A673 (cell line): ENCODE measurements at regions of chr14 and their contacts with region 1.

Region 1: DNA sequence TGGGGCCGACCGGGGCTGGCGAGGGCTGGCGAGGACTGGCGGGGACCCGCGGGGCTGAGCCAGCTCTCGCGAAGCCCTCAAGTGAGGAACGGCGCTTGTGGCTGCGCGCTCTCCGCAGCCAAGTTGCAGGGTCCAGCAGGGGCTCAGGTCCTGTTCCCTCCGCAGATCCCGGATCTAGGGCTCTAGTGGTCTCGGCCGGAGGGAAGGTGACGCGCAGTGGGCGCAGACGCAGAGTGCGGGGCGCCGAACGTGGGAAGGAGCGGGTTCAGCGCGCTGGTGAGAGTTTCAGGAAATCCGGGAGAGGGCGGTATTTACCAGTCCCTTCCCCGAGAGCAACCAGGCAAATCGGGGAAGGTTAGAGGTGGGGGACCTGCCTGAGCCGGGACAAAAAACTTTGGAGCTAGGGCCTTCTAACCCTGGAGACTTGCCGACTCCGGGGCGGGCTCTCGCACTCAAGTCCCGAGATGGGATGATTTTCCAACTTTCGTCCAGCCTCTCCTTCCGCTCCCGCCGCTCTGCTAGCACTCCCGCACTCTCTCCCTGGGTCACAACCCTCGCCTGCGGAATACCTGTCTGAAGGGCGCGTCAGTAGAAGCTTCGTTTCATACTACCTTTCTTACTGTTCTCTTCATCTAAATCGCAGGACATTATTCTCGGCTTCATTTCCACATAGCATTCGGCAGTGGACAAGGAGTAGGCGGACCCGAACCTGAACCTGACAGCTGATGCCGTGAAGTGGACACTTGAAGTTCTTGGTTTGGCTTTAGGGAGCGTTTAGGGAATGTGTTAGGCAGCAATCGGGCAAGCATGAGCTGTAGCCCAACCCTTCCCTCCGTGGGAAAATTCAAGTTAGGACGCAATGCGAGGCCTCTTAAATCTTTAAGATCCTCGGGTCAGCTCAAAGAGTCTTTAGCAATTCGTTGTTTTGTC is 13.6 kb upstream of the PAX9 start:
- DNase-seq: peak; percentile 87
- H3K4me3 ChIP-seq: peak overlapping the region; percentile 59
- H3K27ac ChIP-seq: peak overlapping the region; percentile 83
- H3K4me1 ChIP-seq: peaks cover 24% of the 10 kb centered on the region
- H3K27me3 ChIP-seq: no peaks in the 10 kb centered on the region
- CTCF ChIP-seq: peak; percentile 83

Region 2: DNA sequence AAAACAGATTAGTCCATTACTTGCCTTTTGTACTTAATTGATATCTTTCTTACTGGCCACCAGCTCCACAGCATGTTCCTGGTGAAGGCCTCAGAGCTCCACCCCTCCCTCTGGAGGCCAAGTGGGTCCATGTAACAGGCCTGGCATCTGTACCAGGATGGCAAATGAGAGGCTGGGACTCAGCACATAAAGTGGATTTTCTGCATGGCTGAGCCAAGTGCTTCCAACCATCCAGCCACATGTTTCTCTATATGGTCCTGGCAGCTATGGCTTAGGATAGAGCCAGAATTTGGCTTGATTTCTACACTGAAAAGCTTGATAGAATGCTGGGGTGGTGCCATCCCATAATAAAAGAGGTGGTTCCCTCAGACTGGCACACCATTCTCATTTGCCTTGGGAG is 107.6 kb after region 1 on chr14:
- CTCF ChIA-PET with region 1: interaction called, 4 read pairs
- POLR2A ChIA-PET with region 1: no interaction called
- intact Hi-C with region 1: loop called (anchors 5 kb)
- DNase-seq: peak; percentile 75
- H3K4me3 ChIP-seq: no peak overlapping the region
- H3K27ac ChIP-seq: peak overlapping the region; percentile 84
- H3K4me1 ChIP-seq: peaks cover 58% of the 10 kb centered on the region
- H3K27me3 ChIP-seq: no peaks in the 10 kb centered on the region
- CTCF ChIP-seq: peak; percentile 29; the same call in 1 of the 2 replicates

Region 3: DNA sequence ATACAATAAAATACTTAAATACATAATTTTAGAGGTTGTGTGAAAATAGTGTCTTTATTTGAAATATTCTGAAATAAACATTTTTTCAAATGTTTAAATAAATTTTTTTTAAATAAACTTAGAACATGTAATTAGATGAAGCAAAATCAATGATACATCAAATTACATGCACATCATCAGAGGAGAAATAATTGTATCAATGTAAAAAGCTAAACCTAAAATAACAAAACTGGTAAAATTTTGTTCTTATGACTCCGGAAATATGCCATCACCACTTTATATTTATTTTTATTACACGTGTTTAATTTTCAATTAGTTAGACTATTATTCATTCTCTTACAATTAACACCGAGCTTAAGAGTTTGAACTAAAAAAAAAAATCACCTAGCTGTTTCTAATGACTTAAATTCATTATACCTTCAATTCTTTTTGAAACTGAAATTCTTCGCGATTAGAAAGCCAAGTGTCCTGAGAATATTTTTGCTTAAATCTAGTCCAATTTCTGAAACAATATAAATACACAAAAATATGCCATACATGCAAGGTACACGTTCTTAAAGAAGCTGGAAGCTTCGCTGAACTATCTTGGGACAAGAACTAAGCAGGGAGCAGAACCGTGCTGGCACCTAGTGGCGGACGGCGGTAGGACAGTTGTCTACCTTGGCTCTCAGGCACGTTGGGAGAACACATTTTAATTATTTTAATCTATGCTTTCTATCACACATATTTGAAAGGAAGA is 293.9 kb after region 1 on chr14:
- CTCF ChIA-PET with region 1: interaction called, 19 read pairs
- POLR2A ChIA-PET with region 1: interaction called, 4 read pairs
- intact Hi-C with region 1: loop called (anchors 2 kb)
- DNase-seq: peak; percentile 82
- H3K4me3 ChIP-seq: no peak overlapping the region
- H3K27ac ChIP-seq: no peak overlapping the region
- H3K4me1 ChIP-seq: peaks cover 31% of the 10 kb centered on the region
- H3K27me3 ChIP-seq: no peaks in the 10 kb centered on the region
- CTCF ChIP-seq: peak; percentile 97

Region 4: DNA sequence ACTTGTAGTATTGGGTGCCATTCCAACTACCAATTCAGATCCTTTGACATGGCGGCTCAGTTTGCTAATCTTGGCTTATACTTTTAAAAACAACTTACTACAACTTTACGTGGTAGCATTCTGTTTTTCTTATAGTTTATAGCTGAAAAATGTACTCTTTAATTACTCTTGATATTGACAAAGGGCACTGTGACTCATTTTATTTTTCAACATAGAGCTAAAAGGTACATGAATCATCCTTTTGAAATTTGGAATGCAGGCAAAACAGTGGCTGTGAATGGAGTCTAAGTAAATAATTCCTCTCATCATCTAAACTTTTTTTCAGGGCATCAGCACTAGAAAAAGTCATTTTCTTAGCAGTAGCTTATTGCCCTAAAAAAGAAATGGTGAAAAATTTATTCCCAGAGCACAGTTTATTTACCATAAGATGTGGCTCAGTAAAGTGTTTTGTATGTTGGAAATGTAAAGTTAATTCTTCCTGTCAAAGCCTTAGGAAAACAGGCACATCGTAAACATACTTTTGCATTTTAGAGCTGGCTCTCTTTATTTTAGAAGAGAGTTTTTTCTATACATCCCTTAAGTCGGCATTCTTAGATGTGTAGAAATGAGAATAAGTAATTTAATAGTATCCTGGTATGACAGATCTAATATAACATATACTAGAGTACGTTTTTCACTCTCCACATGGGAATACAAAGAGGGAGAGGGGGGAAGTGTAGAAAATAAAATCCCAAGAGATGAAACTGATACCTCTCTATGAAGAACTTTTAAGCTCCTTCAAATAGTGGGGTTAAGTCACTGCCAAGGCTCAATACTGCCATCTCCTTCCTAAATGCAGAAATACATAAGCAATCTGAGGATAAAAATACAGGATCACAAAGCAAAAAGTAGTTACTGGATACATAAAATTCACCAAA is 469.1 kb after region 1 on chr14:
- CTCF ChIA-PET with region 1: interaction called, 14 read pairs
- POLR2A ChIA-PET with region 1: no interaction called
- intact Hi-C with region 1: loop called (anchors 5 kb)
- DNase-seq: peak; percentile 85
- H3K4me3 ChIP-seq: no peak overlapping the region
- H3K27ac ChIP-seq: no peak overlapping the region
- H3K4me1 ChIP-seq: peaks cover 10% of the 10 kb centered on the region
- H3K27me3 ChIP-seq: no peaks in the 10 kb centered on the region
- CTCF ChIP-seq: peak; percentile 74

Region 5: DNA sequence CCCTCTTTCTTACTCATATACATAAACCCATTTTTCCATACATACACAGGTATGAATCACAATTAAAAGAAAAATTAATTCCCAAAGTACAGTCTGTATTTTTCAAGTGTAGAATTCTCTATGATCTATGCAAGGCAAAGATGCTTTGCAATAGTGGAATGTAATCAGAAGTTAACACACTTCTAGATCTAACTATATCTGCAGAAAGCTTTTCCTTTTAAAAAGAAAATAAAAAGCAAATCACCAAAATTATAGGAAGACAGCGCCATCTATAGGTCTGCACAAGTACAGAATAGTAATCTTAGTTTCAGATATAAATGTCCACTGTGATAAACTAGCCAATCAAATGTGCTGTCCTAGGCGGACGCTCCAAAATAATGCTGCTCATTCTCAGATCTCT is 502.3 kb after region 1 on chr14:
- CTCF ChIA-PET with region 1: interaction called, 18 read pairs
- POLR2A ChIA-PET with region 1: no interaction called
- intact Hi-C with region 1: loop called (anchors 2 kb)
- DNase-seq: peak; percentile 75
- H3K4me3 ChIP-seq: no peak overlapping the region
- H3K27ac ChIP-seq: no peak overlapping the region
- H3K4me1 ChIP-seq: no peaks in the 10 kb centered on the region
- H3K27me3 ChIP-seq: no peaks in the 10 kb centered on the region
- CTCF ChIP-seq: peak; percentile 81